Calu3 (cell line): ENCODE measurements at regions of chr19 and their contacts with region 1.

Region 1: GRCh38 chr19:7562646-7563393 is 27.3 kb downstream of the PNPLA6 start:
- DNase-seq: no peak
- H3K4me3 Mint-ChIP-seq: no peak overlapping the region
- H3K27ac Mint-ChIP-seq: no peak overlapping the region
- H3K4me1 Mint-ChIP-seq: no peaks in the 10 kb centered on the region
- H3K27me3 Mint-ChIP-seq: no peaks in the 10 kb centered on the region
- CTCF ChIP-seq: no peak

Region 2: DNA sequence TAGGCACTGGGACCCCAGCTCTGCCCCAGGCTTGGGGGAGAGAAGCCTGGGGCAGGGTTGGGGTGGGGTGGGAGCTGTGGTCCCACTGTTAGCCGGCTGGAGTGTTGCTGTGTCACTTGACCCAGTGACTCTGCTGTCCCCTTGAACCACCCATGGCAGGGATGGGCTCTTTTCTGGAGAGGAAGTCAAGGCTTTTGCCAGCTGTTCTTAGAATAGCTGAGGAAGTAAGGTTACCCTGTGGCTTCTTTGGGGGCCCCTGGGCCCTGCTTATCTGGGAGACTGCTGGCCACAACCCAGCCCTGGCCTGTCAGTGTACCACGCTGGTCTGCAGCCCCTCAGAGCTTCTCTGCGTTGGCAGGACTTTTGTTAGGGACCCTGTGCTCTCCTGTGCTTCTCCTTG is 18.2 kb before region 1 on chr19:
- CTCF ChIA-PET with region 1: no interaction called
- intact Hi-C with region 1: no loop called
- DNase-seq: no peak
- H3K4me3 Mint-ChIP-seq: no peak overlapping the region
- H3K27ac Mint-ChIP-seq: no peak overlapping the region
- H3K4me1 Mint-ChIP-seq: no peaks in the 10 kb centered on the region
- H3K27me3 Mint-ChIP-seq: no peaks in the 10 kb centered on the region
- CTCF ChIP-seq: no peak

Region 3: GRCh38 chr19:7595466-7596133 is 32.8 kb after region 1 on chr19 and contains the start of gene CAMSAP3:
- CTCF ChIA-PET with region 1: interaction called, 26 read pairs
- intact Hi-C with region 1: no loop called
- DNase-seq: peak; percentile 70
- H3K4me3 Mint-ChIP-seq: peak within 1 kb of the TSS; percentile 82
- H3K27ac Mint-ChIP-seq: peak within 1 kb of the TSS; percentile 2
- H3K4me1 Mint-ChIP-seq: peaks cover 15% of the 10 kb centered on the region
- H3K27me3 Mint-ChIP-seq: no peaks in the 10 kb centered on the region
- CTCF ChIP-seq: no peak
- total RNA-seq, gene CAMSAP3: 26.0 and 30.3 TPM in 2 replicates

Region 4: GRCh38 chr19:7680606-7681339 is 118.0 kb after region 1 on chr19 and contains the start of gene TRAPPC5:
- CTCF ChIA-PET with region 1: interaction called, 51 read pairs
- intact Hi-C with region 1: loop called (anchors 2 kb)
- DNase-seq: peak; percentile 81
- H3K4me3 Mint-ChIP-seq: peak within 1 kb of the TSS; percentile 85
- H3K27ac Mint-ChIP-seq: peak within 1 kb of the TSS; percentile 20
- H3K4me1 Mint-ChIP-seq: peaks cover 7% of the 10 kb centered on the region
- H3K27me3 Mint-ChIP-seq: peaks cover 51% of the 10 kb centered on the region
- CTCF ChIP-seq: peak; percentile 88
- total RNA-seq, gene TRAPPC5: 82.4 and 87.3 TPM in 2 replicates